Heart right ventricle (tissue), 16 donors: ENCODE measurements at regions of chr11 and their contacts with region 1.

Region 1: GRCh38 chr11:17730608-17731462 is 3.7 kb upstream of the KCNC1 start:
- DNase-seq: peak; percentile 81 to 82
- ATAC-seq: peak; percentile 72 to 93 (median 90)
- H3K4me3 ChIP-seq: no peak overlapping the region
- H3K27ac ChIP-seq: no peak overlapping the region
- H3K4me1 ChIP-seq: peaks cover 4 to 20% (median 9%) of the 10 kb centered on the region in 9 donors
- H3K27me3 ChIP-seq: peaks cover 0 to 63% (median 49%) of the 10 kb centered on the region in 7 donors
- CTCF ChIP-seq: peak; percentile 74 to 93 (median 84)

Region 2: GRCh38 chr11:16981651-16982194 is 749.1 kb before region 1 on chr11:
- intact Hi-C with region 1: no loop called
- DNase-seq: no peak
- ATAC-seq: peak in 7 of 8 donors; percentile 21 to 60 (median 56)
- H3K4me3 ChIP-seq: no peak overlapping the region
- H3K27ac ChIP-seq: peak overlapping the region in 2 of 10 donors; percentile 40 to 41
- H3K4me1 ChIP-seq: peaks cover 0 to 32% (median 8%) of the 10 kb centered on the region in 9 donors
- H3K27me3 ChIP-seq: no peaks in the 10 kb centered on the region
- CTCF ChIP-seq: no peak

Region 3: DNA sequence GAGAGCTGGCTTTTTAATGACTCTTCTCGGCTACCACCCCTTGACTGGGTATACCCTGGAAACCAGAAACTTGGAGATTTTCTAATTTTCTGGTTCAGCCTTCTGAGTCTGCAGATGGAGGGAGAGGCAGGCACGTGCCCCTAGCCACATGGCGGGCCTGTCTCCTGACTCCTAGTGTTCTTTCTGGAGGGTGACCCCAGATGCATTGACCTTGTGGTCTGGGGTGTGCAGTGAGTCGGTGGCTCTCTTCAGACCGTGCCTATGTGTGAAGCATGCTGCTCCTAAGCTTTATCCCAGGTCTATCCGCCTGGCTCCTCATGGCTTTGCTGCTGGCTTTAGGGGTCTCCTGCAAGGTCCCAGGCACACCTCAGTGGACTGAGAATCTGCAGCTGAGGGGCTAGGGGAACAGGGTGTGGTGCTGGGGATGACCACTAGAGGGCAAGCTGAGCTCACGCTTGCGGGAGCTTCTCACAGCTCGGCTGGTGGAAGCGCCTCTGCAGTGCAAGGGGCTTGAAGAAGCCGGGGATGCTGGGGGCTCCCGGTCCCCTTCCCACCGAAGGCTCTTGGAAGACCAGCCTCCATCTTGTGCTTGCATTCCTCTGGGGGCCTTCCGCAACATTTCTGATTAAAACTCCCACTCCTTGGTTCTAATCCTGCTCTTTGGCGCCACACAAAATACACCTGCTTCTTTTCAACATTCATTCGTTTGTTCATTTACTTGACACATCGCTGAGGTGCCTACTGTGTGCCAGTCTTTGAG is 132.0 kb before region 1 on chr11:
- intact Hi-C with region 1: loop called in 3 of 10 experiments (anchors 5 to 10 kb)
- DNase-seq: peak; percentile 71 to 74
- ATAC-seq: peak; percentile 73 to 86 (median 82)
- H3K4me3 ChIP-seq: no peak overlapping the region
- H3K27ac ChIP-seq: no peak overlapping the region
- H3K4me1 ChIP-seq: no peaks in the 10 kb centered on the region
- H3K27me3 ChIP-seq: peaks cover 0 to 12% (median 7%) of the 10 kb centered on the region in 7 donors
- CTCF ChIP-seq: peak; percentile 88 to 96 (median 92)

Region 4: GRCh38 chr11:17770917-17771316 is 40.1 kb after region 1 on chr11:
- intact Hi-C with region 1: no loop called
- DNase-seq: no peak
- ATAC-seq: peak in 2 of 8 donors; percentile 38 to 42
- H3K4me3 ChIP-seq: no peak overlapping the region
- H3K27ac ChIP-seq: no peak overlapping the region
- H3K4me1 ChIP-seq: no peaks in the 10 kb centered on the region
- H3K27me3 ChIP-seq: no peaks in the 10 kb centered on the region
- CTCF ChIP-seq: peak in 7 of 9 donors; percentile 11 to 46 (median 28)